ENCODE measurements at regions of chr9 and their contacts with region 1.

Region 1: DNA sequence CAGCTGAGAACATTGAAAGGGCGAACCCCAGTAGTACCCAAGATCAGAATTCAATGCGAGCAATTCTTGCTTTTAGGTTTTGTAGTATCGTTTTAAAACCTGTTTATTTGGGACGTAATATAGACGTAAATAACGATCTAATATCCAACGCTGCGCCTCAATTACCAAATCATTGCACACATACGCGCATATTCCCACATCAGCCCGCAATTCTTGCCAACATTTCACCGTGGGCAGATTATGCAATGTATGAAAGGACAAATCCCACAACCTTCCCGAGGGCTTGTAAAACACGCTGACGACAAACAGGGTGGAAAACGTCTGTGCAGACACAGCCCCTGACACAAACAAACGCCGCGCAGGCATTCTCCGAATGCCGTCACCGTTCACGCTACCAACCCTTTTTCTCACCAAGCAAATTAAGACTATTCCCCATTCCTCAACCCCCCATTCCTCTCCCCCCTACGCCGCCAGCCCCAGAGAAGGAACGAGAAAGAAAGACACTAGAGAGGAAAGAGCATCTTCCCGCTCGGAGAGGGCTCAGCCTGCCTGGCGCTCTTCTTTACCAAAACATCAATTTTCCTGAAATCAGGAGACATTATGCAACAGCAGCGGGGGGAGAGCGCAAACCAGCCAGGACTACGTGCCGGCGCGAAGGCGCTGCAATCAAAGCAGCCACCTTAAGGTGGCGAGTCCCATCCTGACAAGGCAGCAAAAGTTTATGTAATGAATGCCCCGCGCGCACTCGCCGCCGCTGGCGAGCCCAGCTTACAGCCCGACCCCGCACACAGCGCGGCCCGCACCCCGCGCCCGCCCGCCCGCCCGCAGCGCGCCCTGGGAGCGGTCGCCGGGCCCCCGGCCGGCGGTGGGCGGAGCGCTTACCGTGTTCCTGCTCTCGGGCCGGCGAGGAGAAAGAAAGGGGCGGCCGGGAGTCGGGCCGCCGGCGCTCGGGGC is 597 bp downstream of the NFIL3 start:
- DNase-seq: peak; percentile 52 to 71 (median 69)
- ATAC-seq: peak; percentile 14 to 51 (median 34)
- H3K4me3 ChIP-seq: peak overlapping the region; percentile 44 to 88 (median 72)
- H3K27ac ChIP-seq: peak overlapping the region; percentile 86 to 97 (median 93)
- H3K4me1 ChIP-seq: peaks cover 0 to 65% (median 32%) of the 10 kb centered on the region in 12 donors
- H3K27me3 ChIP-seq: no peaks in the 10 kb centered on the region
- CTCF ChIP-seq: peak in 8 of 12 donors; percentile 5 to 53 (median 19)
- POLR2A ChIP-seq: peak in 1 of 2 donors; percentile 32

Region 2: GRCh38 chr9:90577916-90578810 is 844.9 kb before region 1 on chr9:
- intact Hi-C with region 1: no loop called
- DNase-seq: no peak
- ATAC-seq: no peak
- H3K4me3 ChIP-seq: no peak overlapping the region
- H3K27ac ChIP-seq: no peak overlapping the region
- H3K4me1 ChIP-seq: no peaks in the 10 kb centered on the region
- H3K27me3 ChIP-seq: peaks cover 0 to 4% (median 0%) of the 10 kb centered on the region in 9 donors
- CTCF ChIP-seq: no peak
- POLR2A ChIP-seq: no peak

Region 3: GRCh38 chr9:90921111-90921510 is 501.9 kb before region 1 on chr9:
- intact Hi-C with region 1: loop called in 5 of 10 experiments (anchors 2 to 5 kb)
- DNase-seq: peak; percentile 72 to 95 (median 88)
- ATAC-seq: peak; percentile 92 to 97 (median 96)
- H3K4me3 ChIP-seq: no peak overlapping the region
- H3K27ac ChIP-seq: peak overlapping the region in 6 of 12 donors; percentile 16 to 81 (median 60)
- H3K4me1 ChIP-seq: peaks cover 0 to 12% (median 2%) of the 10 kb centered on the region in 12 donors
- H3K27me3 ChIP-seq: no peaks in the 10 kb centered on the region
- CTCF ChIP-seq: peak in 1 of 12 donors; percentile 33
- POLR2A ChIP-seq: no peak

Region 4: DNA sequence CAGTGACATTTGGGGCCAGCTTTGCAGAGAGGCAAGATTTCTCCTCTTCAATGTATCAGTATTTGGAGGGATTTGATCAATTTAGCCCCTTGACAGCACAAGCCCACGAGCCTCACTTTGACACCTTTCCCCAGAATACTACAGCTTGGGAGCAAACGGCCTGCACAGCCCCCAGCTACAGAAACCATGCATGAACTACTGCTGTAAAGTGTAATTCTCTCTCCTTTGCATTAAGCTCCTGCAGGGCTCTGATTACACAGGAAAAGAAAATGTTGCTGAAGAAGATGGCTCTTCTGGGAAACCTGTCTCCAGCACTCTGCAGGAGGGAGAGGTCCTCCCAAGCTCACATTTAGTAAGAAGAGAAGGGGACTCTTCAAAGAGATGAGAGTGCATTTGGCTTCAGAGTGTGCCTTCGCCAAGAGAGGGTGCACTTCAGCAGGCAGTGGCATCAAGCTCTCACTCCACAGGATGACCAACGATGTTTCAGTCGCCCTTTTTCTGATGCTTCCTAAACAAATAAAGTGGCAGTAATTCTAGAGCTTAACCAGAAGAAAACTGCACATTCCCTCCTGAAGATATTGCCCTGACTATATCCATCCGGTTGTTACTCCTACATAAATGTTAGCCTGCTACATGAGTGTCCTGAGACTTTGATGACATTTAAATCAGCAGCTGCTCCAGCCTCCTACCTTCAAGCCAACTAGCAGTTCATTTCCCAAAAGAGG is 333.5 kb before region 1 on chr9:
- intact Hi-C with region 1: loop called in 3 of 10 experiments (anchors 5 to 10 kb)
- DNase-seq: peak in 1 of 5 donors; percentile 40
- ATAC-seq: peak; percentile 76 to 89 (median 82)
- H3K4me3 ChIP-seq: no peak overlapping the region
- H3K27ac ChIP-seq: no peak overlapping the region
- H3K4me1 ChIP-seq: peaks cover 0 to 10% (median 0%) of the 10 kb centered on the region in 12 donors
- H3K27me3 ChIP-seq: no peaks in the 10 kb centered on the region
- CTCF ChIP-seq: peak; percentile 20 to 68 (median 52)
- POLR2A ChIP-seq: no peak

Region 5: GRCh38 chr9:91193658-91194391 is 229.2 kb before region 1 on chr9:
- intact Hi-C with region 1: loop called in 9 of 10 experiments (anchors 1 to 10 kb)
- DNase-seq: peak; percentile 83 to 94 (median 90)
- ATAC-seq: peak; percentile 48 to 74 (median 72)
- H3K4me3 ChIP-seq: peak overlapping the region; percentile 13 to 70 (median 50)
- H3K27ac ChIP-seq: peak overlapping the region; percentile 95 to 100 (median 98)
- H3K4me1 ChIP-seq: peaks cover 6 to 75% (median 43%) of the 10 kb centered on the region in 12 donors
- H3K27me3 ChIP-seq: no peaks in the 10 kb centered on the region
- CTCF ChIP-seq: peak in 2 of 12 donors; percentile 10 to 19
- POLR2A ChIP-seq: no peak

Region 6: DNA sequence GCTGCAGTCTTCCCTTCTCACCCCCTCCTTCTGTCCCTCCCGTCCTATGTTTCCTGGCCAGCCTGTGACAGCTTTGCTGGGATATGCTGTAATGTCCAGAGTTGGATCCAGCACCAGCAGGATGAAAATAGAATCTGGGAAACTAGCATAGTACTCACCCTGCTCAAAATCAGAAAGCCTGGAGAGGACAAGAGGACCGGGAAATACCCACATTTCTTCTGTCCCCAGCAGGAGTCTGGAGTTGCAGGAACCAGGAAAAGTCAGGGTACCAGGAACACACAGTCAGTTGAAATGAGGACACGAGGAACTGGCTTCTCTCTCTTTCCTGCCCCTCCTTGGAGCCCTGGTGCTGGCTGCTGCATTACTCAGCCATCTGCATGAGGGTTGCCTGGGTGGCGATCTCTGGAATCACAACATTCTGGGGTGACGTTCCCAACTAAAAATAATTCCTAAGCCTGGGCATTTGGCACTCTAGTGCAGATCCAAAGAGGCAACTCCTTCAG is 60.2 kb after region 1 on chr9:
- intact Hi-C with region 1: loop called in 2 of 10 experiments (anchors 2 to 5 kb)
- DNase-seq: peak; percentile 57 to 84 (median 68)
- ATAC-seq: peak; percentile 91 to 95 (median 93)
- H3K4me3 ChIP-seq: peak overlapping the region in 8 of 12 donors; percentile 2 to 41 (median 27)
- H3K27ac ChIP-seq: peak overlapping the region; percentile 77 to 93 (median 87)
- H3K4me1 ChIP-seq: peaks cover 0 to 30% (median 4%) of the 10 kb centered on the region in 12 donors
- H3K27me3 ChIP-seq: no peaks in the 10 kb centered on the region
- CTCF ChIP-seq: no peak
- POLR2A ChIP-seq: no peak

Region 7: GRCh38 chr9:91681461-91682305 is 258.6 kb after region 1 on chr9:
- intact Hi-C with region 1: loop called in 3 of 10 experiments (anchors 5 to 10 kb)
- DNase-seq: peak; percentile 67 to 89 (median 79)
- ATAC-seq: peak; percentile 82 to 99 (median 96)
- H3K4me3 ChIP-seq: peak overlapping the region in 4 of 12 donors; percentile 15 to 33 (median 32)
- H3K27ac ChIP-seq: no peak overlapping the region
- H3K4me1 ChIP-seq: peaks cover 0 to 7% (median 0%) of the 10 kb centered on the region in 12 donors
- H3K27me3 ChIP-seq: peaks cover 0 to 7% (median 0%) of the 10 kb centered on the region in 9 donors
- CTCF ChIP-seq: peak; percentile 80 to 94 (median 86)
- POLR2A ChIP-seq: no peak